ENCODE measurements at regions of chr10 and their contacts with region 1.

Region 1: GRCh38 chr10:48444266-48444665 is 137.8 kb downstream of the MAPK8 start:
- DNase-seq: peak; percentile 76
- H3K4me3 ChIP-seq: no peak overlapping the region
- H3K27ac ChIP-seq: no peak overlapping the region
- H3K4me1 ChIP-seq: peaks cover 5% of the 10 kb centered on the region
- H3K27me3 ChIP-seq: no peaks in the 10 kb centered on the region
- CTCF ChIP-seq: peak; percentile 29 to 58
- POLR2A ChIP-seq: no peak

Region 2: GRCh38 chr10:48506147-48506917 is 62.1 kb after region 1 on chr10:
- CTCF ChIA-PET with region 1: interaction called, 73 read pairs
- POLR2A ChIA-PET with region 1: no interaction called
- dilution Hi-C with region 1: no loop called
- intact Hi-C with region 1: loop called (anchors 1 kb)
- DNase-seq: peak; percentile 67
- H3K4me3 ChIP-seq: no peak overlapping the region
- H3K27ac ChIP-seq: no peak overlapping the region
- H3K4me1 ChIP-seq: peaks cover 19% of the 10 kb centered on the region
- H3K27me3 ChIP-seq: no peaks in the 10 kb centered on the region
- CTCF ChIP-seq: peak; percentile 36 to 53
- POLR2A ChIP-seq: no peak

Measured in endothelial cell of umbilical vein (primary cell).